K562 (cell line): ENCODE measurements at regions of chr3 and their contacts with region 1.

Region 1: GRCh38 chr3:156674046-156674910 is at the start of gene TIPARP:
- DNase-seq: peak; percentile 97 to 99 (median 98)
- ATAC-seq: peak; percentile 90
- H3K4me3 ChIP-seq: peak within 1 kb of the TSS; percentile 89
- H3K27ac ChIP-seq: peak within 1 kb of the TSS; percentile 70
- H3K4me1 ChIP-seq: peaks cover 21 to 33% of the 10 kb centered on the region in 2 experiments; a peak in 4 of 5 replicates
- H3K27me3 ChIP-seq: no peaks in the 10 kb centered on the region
- CTCF ChIP-seq: peak; percentile 84 to 95 (median 94)
- EP300 ChIP-seq: no peak; the same call in 1 of the 2 replicates
- POLR2A ChIP-seq: peak; percentile 93
- RAD21 ChIP-seq: peak; percentile 95 to 98
- polyA plus RNA-seq, gene TIPARP: 2.4 to 3.5 TPM

Region 2: GRCh38 chr3:156151824-156152428 is 522.4 kb before region 1 on chr3:
- CTCF ChIA-PET with region 1: interaction called, 14 read pairs
- POLR2A ChIA-PET with region 1: no interaction called
- in situ Hi-C with region 1: loop called (anchors 25 kb)
- intact Hi-C with region 1: loop called (anchors 5 kb)
- DNase-seq: peak; percentile 35 to 69 (median 49)
- ATAC-seq: peak; percentile 91
- H3K4me3 ChIP-seq: no peak overlapping the region
- H3K27ac ChIP-seq: no peak overlapping the region
- H3K4me1 ChIP-seq: peaks cover 0 to 7% of the 10 kb centered on the region in 2 experiments; a peak in 2 of 5 replicates
- H3K27me3 ChIP-seq: peaks cover 2 to 4% of the 10 kb centered on the region in 2 experiments; a peak in 2 of 5 replicates
- CTCF ChIP-seq: peak; percentile 79 to 92 (median 91)
- EP300 ChIP-seq: no peak
- POLR2A ChIP-seq: no peak
- RAD21 ChIP-seq: peak; percentile 67 to 85

Region 3: GRCh38 chr3:156554842-156555687 is 119.2 kb before region 1 on chr3 and contains the start of gene SSR3:
- CTCF ChIA-PET with region 1: interaction called, 11 read pairs
- POLR2A ChIA-PET with region 1: interaction called, 27 read pairs
- in situ Hi-C with region 1: no loop called
- intact Hi-C with region 1: loop called (anchors 1 kb)
- DNase-seq: peak; percentile 97 to 99 (median 97)
- ATAC-seq: peak; percentile 98
- H3K4me3 ChIP-seq: peak within 1 kb of the TSS; percentile 74
- H3K27ac ChIP-seq: peak within 1 kb of the TSS; percentile 86
- H3K4me1 ChIP-seq: peaks cover 6 to 42% of the 10 kb centered on the region in 2 experiments; a peak in 4 of 5 replicates
- H3K27me3 ChIP-seq: no peaks in the 10 kb centered on the region
- CTCF ChIP-seq: no peak; a peak in 1 of 6 replicates
- EP300 ChIP-seq: peak; percentile 9; the same call in 1 of the 2 replicates
- POLR2A ChIP-seq: peak; percentile 96
- RAD21 ChIP-seq: no peak
- polyA plus RNA-seq, gene SSR3: 423 to 464 TPM

Region 4: GRCh38 chr3:156691920-156692319 is 17.6 kb after region 1 on chr3:
- CTCF ChIA-PET with region 1: no interaction called
- POLR2A ChIA-PET with region 1: interaction called, 14 read pairs
- in situ Hi-C with region 1: no loop called
- intact Hi-C with region 1: no loop called
- DNase-seq: no peak
- ATAC-seq: no peak
- H3K4me3 ChIP-seq: no peak overlapping the region
- H3K27ac ChIP-seq: no peak overlapping the region
- H3K4me1 ChIP-seq: peaks cover 0 to 39% of the 10 kb centered on the region in 2 experiments; a peak in 3 of 5 replicates
- H3K27me3 ChIP-seq: no peaks in the 10 kb centered on the region
- CTCF ChIP-seq: no peak
- EP300 ChIP-seq: no peak
- POLR2A ChIP-seq: no peak
- RAD21 ChIP-seq: no peak

Region 5: GRCh38 chr3:156760333-156760732 is 86.1 kb after region 1 on chr3:
- CTCF ChIA-PET with region 1: no interaction called
- POLR2A ChIA-PET with region 1: no interaction called
- in situ Hi-C with region 1: no loop called
- intact Hi-C with region 1: no loop called
- DNase-seq: peak in 1 of 4 experiments; percentile 53
- ATAC-seq: peak; percentile 69
- H3K4me3 ChIP-seq: no peak overlapping the region
- H3K27ac ChIP-seq: peak overlapping the region; percentile 27; the same call in 1 of the 3 replicates
- H3K4me1 ChIP-seq: peaks cover 0 to 17% of the 10 kb centered on the region in 2 experiments; a peak in 3 of 5 replicates
- H3K27me3 ChIP-seq: no peaks in the 10 kb centered on the region
- CTCF ChIP-seq: no peak
- EP300 ChIP-seq: peak; percentile 24; the same call in 1 of the 2 replicates
- POLR2A ChIP-seq: no peak
- RAD21 ChIP-seq: no peak

Region 6: DNA sequence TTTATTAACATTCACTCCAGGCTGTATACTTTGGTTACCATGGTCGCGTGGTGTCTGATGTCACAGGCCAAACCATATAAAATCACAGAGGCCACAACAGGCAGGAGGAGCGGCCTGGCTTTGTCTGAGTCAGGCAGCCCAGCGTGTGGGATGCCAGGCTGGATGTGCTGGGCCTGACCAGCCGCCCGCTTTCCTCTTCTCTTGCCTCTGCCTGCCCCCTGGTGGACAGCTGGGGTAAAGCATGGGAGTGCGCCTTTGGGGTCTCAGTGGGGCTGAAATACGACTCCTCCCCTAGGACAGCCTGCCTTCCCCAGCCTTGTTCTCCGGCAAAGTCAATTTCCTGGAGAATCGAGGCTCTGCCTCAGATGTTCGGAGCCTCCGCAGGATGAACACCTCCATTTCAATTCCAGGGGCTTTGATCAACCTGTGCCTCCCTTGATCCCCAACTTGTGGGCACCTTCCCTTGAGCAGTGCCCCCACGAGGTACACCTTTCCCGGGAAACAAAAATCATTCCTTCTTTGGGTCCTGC is 407.5 kb after region 1 on chr3:
- CTCF ChIA-PET with region 1: interaction called, 28 read pairs
- POLR2A ChIA-PET with region 1: no interaction called
- in situ Hi-C with region 1: no loop called
- intact Hi-C with region 1: loop called (anchors 1 kb)
- DNase-seq: peak; percentile 80 to 87 (median 86)
- ATAC-seq: peak; percentile 95
- H3K4me3 ChIP-seq: no peak overlapping the region
- H3K27ac ChIP-seq: no peak overlapping the region
- H3K4me1 ChIP-seq: peaks cover 11 to 13% of the 10 kb centered on the region in 2 experiments; a peak in 4 of 5 replicates
- H3K27me3 ChIP-seq: no peaks in the 10 kb centered on the region
- CTCF ChIP-seq: peak; percentile 86 to 96 (median 91)
- EP300 ChIP-seq: no peak
- POLR2A ChIP-seq: no peak
- RAD21 ChIP-seq: peak; percentile 96 to 97

Region 7: DNA sequence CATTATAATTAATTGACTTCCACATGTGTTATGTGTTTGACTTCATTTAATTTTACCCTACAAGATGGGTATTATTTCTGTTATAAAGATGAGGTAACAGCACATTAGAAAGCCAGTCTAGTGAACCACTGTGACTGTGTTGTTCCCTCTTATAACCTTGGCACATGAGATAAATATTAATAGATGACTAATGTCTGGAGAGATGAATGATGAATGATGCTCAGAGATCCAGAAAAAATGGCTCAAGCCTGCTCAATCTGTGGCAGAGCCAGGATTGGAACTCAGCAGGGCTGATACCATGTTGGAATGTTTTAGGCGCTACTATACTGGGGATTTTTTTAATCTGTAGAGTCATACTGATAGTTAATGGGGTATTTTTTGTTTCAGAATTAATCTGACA is 643.6 kb after region 1 on chr3:
- CTCF ChIA-PET with region 1: no interaction called
- POLR2A ChIA-PET with region 1: no interaction called
- in situ Hi-C with region 1: no loop called
- intact Hi-C with region 1: no loop called
- DNase-seq: no peak
- ATAC-seq: no peak
- H3K4me3 ChIP-seq: no peak overlapping the region
- H3K27ac ChIP-seq: no peak overlapping the region
- H3K4me1 ChIP-seq: no peaks in the 10 kb centered on the region; a peak in 1 of 5 replicates
- H3K27me3 ChIP-seq: no peaks in the 10 kb centered on the region
- CTCF ChIP-seq: no peak
- EP300 ChIP-seq: no peak
- POLR2A ChIP-seq: no peak
- RAD21 ChIP-seq: no peak